ENCODE measurements at regions of chr10 and their contacts with region 1.

Region 1: GRCh38 chr10:5889624-5890451 is at the starts of genes ANKRD16 and FBH1:
- DNase-seq: peak; percentile 98
- ATAC-seq: peak; percentile 87 to 89
- H3K4me3 ChIP-seq: peak within 1 kb of the TSS; percentile 69 to 91 (median 74)
- H3K27ac ChIP-seq: peak within 1 kb of the TSS; percentile 77 to 95 (median 88)
- H3K4me1 ChIP-seq: peaks cover 38 to 46% of the 10 kb centered on the region in 2 donors
- H3K27me3 ChIP-seq: no peaks in the 10 kb centered on the region
- CTCF ChIP-seq: no peak
- POLR2A ChIP-seq: peak; percentile 82 to 87
- total RNA-seq, gene ANKRD16: 1.4 to 5.4 (median 3.8) TPM
- total RNA-seq, gene FBH1: 62.6 to 96.9 (median 68.2) TPM

Region 2: DNA sequence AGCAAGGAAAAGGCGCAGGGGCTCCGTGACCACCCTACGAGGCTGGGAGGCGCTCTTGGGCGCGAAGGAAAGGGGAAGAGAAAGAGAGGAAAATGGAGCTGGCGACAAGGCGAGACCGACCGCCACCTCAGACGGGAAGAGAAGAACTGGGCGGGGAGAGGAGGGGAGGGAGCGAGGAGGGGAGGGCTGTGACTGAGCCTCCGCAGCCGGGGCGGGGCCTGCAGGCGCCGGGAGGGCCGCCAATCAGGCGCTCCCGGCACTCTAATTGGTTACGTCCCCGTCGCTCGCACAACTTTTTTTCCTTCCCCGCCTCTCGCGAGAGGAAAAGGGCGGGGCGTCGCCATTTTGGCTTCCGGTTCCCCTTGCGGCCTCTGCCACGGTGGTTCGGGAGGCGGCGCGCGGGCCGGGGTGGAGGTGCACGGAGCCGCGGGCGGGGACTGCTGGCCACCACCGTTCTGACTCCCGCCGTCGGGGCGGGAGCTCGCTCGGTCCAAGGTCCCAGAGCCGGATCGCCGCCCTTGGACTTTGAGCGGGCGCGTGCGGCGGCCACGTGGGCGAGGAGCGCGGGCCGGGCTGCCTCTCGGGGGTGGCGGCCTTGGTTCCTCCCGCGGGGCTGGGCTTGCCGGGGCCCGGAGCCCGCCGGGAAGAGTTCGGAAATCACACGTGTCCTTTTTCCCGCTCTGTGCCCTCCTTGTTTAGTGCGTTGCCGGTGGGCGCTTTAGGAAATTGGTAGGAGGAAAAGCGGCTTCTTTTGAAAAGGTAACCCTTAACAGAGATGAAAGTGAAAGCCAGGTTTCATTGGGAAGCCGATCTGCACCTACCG is 76.3 kb before region 1 on chr10 and contains the start of gene GDI2:
- in situ Hi-C with region 1: no loop called
- intact Hi-C with region 1: loop called (anchors 1 kb)
- DNase-seq: peak; percentile 94 to 96
- ATAC-seq: peak; percentile 92 to 96
- H3K4me3 ChIP-seq: peak within 1 kb of the TSS; percentile 85 to 97 (median 90)
- H3K27ac ChIP-seq: peak within 1 kb of the TSS; percentile 91 to 98 (median 98)
- H3K4me1 ChIP-seq: peaks cover 43 to 47% of the 10 kb centered on the region in 2 donors
- H3K27me3 ChIP-seq: no peaks in the 10 kb centered on the region
- CTCF ChIP-seq: peak in 2 of 5 experiments; percentile 15 to 21
- POLR2A ChIP-seq: peak; percentile 89 to 91
- total RNA-seq, gene GDI2: 143 to 197 (median 171) TPM

Region 3: GRCh38 chr10:5944389-5945189 is 54.8 kb after region 1 on chr10:
- in situ Hi-C with region 1: no loop called
- intact Hi-C with region 1: loop called (anchors 2 kb)
- DNase-seq: peak; percentile 70 to 86
- ATAC-seq: peak; percentile 84 to 96
- H3K4me3 ChIP-seq: peak overlapping the region in 2 of 4 donors; percentile 39 to 41
- H3K27ac ChIP-seq: peak overlapping the region; percentile 69 to 74 (median 72)
- H3K4me1 ChIP-seq: peaks cover 16 to 30% of the 10 kb centered on the region in 2 donors
- H3K27me3 ChIP-seq: no peaks in the 10 kb centered on the region
- CTCF ChIP-seq: no peak
- POLR2A ChIP-seq: peak in 1 of 2 donors; percentile 42

Region 4: DNA sequence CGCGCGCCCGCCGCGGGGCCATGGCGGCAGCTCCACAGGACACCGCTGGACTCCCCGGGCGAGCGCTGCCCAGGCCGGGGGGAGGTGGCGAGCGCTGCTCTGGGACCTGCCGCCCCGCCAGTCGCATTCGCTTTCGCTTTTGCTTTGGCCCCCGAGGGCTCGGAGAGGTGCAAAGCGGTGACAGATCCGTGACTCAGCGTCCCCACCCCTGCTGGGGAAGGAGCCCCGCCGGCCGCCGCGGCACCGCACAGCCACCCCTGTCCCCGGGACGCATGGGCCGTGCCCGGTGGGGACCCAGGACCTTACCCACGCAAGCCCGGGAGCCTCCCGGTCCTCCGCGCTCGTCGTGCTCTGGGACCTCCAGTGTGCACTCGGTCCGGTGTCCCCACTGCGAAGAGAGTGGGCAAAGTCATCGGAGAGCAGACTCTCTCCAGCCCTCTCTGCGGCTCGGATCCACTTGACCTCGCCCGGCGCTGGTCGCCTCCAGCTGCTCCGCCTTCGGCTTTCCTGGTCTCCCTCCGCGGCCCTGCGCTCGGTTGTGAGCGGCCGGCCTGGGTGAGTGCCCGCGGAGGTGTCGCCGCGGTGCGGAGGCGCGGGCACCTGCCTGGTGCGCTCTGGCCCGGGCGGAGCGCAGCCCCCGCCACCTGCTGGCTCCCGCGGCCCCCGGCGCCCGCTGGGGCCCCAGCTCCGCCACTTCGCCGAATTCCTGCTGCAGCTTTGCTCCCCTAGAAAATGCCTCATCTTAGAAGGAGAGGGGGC is 87.8 kb after region 1 on chr10 and contains the start of gene IL15RA:
- in situ Hi-C with region 1: no loop called
- intact Hi-C with region 1: loop called (anchors 1 kb)
- DNase-seq: peak; percentile 48 to 76
- ATAC-seq: peak; percentile 75 to 77
- H3K4me3 ChIP-seq: peak within 1 kb of the TSS; percentile 84 to 96 (median 87)
- H3K27ac ChIP-seq: peak within 1 kb of the TSS; percentile 91 to 97 (median 93)
- H3K4me1 ChIP-seq: peaks cover 7 to 19% of the 10 kb centered on the region in 2 donors
- H3K27me3 ChIP-seq: no peaks in the 10 kb centered on the region
- CTCF ChIP-seq: peak in 4 of 5 experiments; percentile 12 to 54 (median 31)
- POLR2A ChIP-seq: peak; percentile 57 to 58
- total RNA-seq, gene IL15RA: 13.1 to 17.6 (median 15.6) TPM

Region 5: GRCh38 chr10:6088721-6089390 is 199.0 kb after region 1 on chr10 and contains the start of gene RBM17:
- in situ Hi-C with region 1: no loop called
- intact Hi-C with region 1: loop called (anchors 5 kb)
- DNase-seq: peak; percentile 92 to 96
- ATAC-seq: peak; percentile 86 to 91
- H3K4me3 ChIP-seq: peak within 1 kb of the TSS; percentile 83 to 94 (median 88)
- H3K27ac ChIP-seq: peak within 1 kb of the TSS; percentile 78 to 96 (median 82)
- H3K4me1 ChIP-seq: peaks cover 39 to 48% of the 10 kb centered on the region in 2 donors
- H3K27me3 ChIP-seq: peaks cover 0 to 5% (median 0%) of the 10 kb centered on the region in 3 donors
- CTCF ChIP-seq: peak; percentile 99 to 100 (median 100)
- POLR2A ChIP-seq: peak; percentile 83 to 87
- total RNA-seq, gene RBM17: 53.2 to 67.4 (median 60.1) TPM